Mammary epithelial cell (primary cell): ENCODE measurements at regions of chrX and their contacts with region 1.

Region 1: GRCh38 chrX:48864210-48864609 is 28.8 kb upstream of the PCSK1N start:
- DNase-seq: peak; percentile 64
- H3K4me3 ChIP-seq: no peak overlapping the region
- H3K27ac ChIP-seq: no peak overlapping the region
- H3K4me1 ChIP-seq: no peaks in the 10 kb centered on the region
- H3K27me3 ChIP-seq: no peaks in the 10 kb centered on the region
- CTCF ChIP-seq: no peak

Region 2: DNA sequence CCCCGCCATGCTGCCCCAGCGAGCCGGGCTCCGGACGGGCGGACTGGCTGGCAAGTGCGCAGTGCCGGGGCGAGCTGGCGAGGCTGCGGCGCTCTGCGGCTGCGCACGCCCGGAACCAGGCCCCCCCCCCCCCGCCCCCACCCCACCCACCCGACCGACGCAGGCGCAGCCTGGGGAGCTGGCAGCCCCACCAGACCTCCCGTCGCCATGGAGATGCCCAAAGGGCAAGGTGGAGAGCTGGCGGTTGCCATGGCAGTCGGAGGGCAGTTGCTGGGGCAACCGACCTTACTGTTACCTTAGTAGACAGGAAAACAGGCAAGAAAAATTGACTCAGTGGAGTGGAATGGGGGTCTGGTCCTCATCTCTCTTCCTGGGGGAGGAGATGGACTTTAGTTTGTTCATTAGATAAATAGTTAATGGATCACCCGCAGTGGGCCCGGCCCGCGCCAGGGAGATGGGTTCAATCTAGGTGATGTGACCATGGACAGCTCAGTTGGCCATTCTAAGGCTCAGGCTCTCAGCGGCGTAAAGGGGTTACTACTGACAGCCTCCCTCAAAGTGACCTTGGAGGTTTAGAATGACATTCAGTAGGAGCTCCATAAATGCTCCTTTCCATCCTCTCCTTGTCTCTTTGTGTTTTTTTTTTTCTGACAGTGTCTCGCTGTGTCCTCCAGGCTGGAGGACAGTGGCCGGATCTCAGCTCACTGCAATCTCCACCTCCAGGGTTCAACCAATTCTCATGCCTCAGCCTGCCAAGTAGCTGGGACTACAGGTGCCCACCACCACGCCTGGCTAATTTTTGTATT is 28.5 kb before region 1 on chrX and contains the start of gene PCSK1N:
- CTCF ChIA-PET with region 1: no interaction called
- dilution Hi-C with region 1: no loop called
- in situ Hi-C with region 1: no loop called
- intact Hi-C with region 1: loop called (anchors 1 kb)
- DNase-seq: peak; percentile 28
- H3K4me3 ChIP-seq: peak within 1 kb of the TSS; percentile 2 to 55 (median 47)
- H3K27ac ChIP-seq: no peak within 1 kb of the TSS
- H3K4me1 ChIP-seq: peaks cover 7% of the 10 kb centered on the region
- H3K27me3 ChIP-seq: no peaks in the 10 kb centered on the region
- CTCF ChIP-seq: no peak
- total RNA-seq, gene PCSK1N: 16.5 to 36.4 TPM

Region 3: DNA sequence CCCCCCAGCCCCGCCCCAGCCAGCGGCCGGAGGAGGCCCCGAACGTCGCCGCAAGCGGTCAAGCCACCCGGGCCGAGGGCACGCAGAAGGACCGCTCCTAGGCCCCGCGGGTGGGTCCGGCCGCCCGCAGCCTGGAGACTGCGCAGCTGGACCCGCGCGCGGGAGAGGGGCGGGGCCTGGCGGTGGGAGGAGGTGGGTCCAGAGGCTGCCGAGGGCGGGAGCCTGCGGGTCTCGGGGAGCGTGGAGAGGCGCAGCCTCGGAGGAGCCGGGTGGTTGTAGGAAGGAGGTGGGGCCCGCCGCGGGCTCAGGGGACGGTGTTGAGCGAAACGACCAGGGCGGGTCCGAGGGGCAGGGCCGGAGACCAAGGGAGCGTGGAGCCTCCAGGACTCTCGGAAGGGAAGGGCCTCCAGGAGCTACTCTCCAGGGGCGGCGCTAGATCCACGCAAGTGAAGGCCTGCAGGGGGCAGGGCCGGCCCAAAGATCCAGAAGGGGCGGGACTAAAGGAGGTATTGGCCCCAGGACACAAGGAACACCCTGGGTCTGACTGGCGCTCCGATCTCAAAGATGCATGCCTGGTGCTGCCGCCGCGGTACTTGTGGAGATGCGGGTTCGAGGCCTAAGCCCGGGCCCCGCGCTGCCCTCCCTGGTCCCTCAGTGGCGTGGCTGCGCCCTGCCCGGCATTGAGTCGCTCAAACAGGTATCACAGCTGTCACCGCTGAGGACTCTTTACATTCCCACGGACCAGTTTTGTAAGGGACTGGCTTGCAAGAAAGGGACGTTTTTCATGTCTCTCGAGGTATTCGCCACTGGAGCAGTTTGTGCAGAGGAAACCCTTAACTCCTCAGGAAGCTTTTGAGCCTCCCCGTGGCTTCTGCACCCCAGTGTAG is 27.4 kb after region 1 on chrX:
- CTCF ChIA-PET with region 1: no interaction called
- dilution Hi-C with region 1: no loop called
- in situ Hi-C with region 1: no loop called
- intact Hi-C with region 1: loop called (anchors 2 kb)
- DNase-seq: peak; percentile 85
- H3K4me3 ChIP-seq: peak overlapping the region; percentile 48 to 51 (median 49)
- H3K27ac ChIP-seq: no peak overlapping the region
- H3K4me1 ChIP-seq: peaks cover 4% of the 10 kb centered on the region
- H3K27me3 ChIP-seq: no peaks in the 10 kb centered on the region
- CTCF ChIP-seq: peak; percentile 24 to 55

Region 4: GRCh38 chrX:48897621-48898306 is 33.6 kb after region 1 on chrX and contains the starts of genes PQBP1 and TIMM17B:
- CTCF ChIA-PET with region 1: no interaction called
- dilution Hi-C with region 1: no loop called
- in situ Hi-C with region 1: no loop called
- intact Hi-C with region 1: loop called (anchors 1 kb)
- DNase-seq: peak; percentile 94
- H3K4me3 ChIP-seq: peak within 1 kb of the TSS; percentile 26 to 77 (median 59)
- H3K27ac ChIP-seq: peak within 1 kb of the TSS; percentile 78
- H3K4me1 ChIP-seq: no peaks in the 10 kb centered on the region
- H3K27me3 ChIP-seq: no peaks in the 10 kb centered on the region
- CTCF ChIP-seq: no peak
- total RNA-seq, gene PQBP1: 31.2 to 69.5 TPM
- total RNA-seq, gene TIMM17B: 28.0 to 53.2 TPM